BJ (cell line): ENCODE measurements at regions of chr3 and their contacts with region 1.

Region 1: DNA sequence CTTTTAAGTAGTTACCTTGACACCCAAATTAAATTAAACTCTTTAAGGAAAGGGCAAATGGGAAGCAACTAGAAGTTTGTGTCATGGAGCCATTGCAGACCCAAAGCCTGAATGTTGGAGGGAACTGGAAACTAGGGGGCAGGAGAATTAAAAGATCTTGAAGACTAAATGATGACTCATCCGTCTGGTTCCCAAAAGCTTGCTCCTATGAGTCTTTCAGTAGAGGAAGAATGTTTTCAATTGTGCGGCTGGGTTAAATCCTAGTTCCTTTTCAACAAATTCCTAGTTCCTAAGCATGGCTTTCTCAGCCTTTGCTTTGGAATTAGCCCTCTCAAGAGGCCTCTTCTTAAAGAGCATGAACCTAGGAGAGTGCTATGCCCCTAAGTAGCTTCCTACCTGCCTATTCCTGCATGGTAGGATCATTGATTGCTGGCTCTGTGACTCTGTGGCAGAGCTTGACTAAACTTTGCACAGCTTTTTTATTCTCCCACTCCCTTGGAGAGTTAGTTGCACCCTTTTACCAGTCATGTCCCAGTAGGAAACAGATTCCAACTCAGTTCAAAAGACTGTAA is 17.7 kb downstream of the CLEC3B start:
- DNase-seq: peak; percentile 52
- H3K4me3 ChIP-seq: no peak overlapping the region
- H3K27me3 ChIP-seq: no peaks in the 10 kb centered on the region
- CTCF ChIP-seq: peak; percentile 50

Region 2: DNA sequence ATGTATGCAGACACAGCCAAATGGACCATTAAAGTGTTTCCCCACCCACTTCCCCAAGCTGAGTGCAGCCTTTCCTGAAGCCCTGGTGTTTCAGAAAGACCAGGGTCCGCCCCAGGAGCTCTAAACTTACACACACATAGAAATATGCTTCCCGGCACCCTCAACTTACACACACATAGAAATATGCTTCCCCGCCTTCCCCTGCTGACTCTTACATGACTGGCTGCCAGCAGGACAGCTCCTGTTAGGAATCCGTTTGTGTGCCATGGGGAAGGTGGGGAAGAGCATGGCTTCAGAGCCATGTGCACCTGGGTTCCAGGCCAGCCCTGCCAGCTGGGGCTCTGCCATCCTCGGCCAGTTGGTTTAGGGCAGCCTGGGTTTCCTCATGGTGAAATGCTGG is 14.2 kb before region 1 on chr3:
- CTCF ChIA-PET with region 1: interaction called, 11 read pairs
- POLR2A ChIA-PET with region 1: no interaction called
- DNase-seq: no peak
- H3K4me3 ChIP-seq: no peak overlapping the region
- H3K27me3 ChIP-seq: no peaks in the 10 kb centered on the region
- CTCF ChIP-seq: no peak

Region 3: DNA sequence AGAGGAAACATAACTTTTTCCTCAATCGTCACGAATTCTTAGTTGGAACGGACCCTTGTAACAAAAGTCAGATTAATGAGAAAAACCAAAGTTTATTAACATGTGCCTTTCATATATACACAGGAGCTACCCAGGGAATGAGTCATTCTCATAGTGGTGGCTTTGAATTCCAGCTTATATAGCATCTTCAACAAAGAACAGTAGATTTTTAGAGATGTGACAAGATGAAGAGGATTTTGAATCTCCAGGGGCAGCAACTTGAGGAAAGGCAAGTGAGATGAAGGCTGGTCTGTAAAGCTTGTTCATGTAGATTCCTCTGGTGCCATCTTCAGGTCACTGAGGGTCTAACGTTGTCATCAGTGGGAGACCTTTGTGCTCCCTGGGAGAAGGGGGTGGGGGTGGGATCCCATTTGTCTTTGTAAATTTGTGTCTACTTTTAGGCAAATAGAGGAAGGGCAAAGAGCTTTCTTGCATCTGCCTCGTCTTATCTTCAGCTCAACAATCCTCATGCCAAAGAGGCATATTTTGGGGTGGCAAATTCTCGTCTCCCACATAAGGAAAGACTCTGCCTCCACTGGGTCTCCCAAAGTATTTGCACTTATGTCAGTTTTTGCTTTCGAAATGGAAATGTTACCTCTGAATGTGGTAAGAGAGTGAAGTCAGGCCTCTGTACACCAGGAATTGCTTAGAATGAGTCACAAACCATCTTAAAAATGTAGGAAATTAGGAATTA is 11.8 kb after region 1 on chr3:
- CTCF ChIA-PET with region 1: interaction called, 39 read pairs
- POLR2A ChIA-PET with region 1: interaction called, 3 read pairs
- DNase-seq: peak; percentile 43
- H3K4me3 ChIP-seq: no peak overlapping the region
- H3K27me3 ChIP-seq: no peaks in the 10 kb centered on the region
- CTCF ChIP-seq: peak; percentile 10; the same call in 1 of the 2 replicates

Region 4: DNA sequence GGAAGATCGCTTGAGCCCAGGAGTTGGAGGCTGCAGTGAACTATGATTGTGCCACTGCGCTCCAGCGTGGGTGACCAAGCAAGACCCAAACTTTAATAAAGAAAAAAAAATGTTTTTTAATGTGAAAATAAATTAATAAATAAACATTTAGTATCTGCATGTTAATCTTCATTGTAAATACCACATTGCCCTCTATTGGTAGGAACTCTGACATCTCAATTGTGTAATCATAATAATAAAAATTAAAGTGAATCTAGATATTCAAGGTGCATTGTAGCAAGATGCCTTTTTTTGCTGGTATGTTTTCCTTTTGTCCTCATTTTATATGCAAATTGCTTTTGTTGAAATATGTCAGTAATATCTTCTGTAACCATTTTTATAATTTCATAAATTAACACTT is 455.7 kb after region 1 on chr3:
- CTCF ChIA-PET with region 1: interaction called, 81 read pairs
- POLR2A ChIA-PET with region 1: no interaction called
- DNase-seq: no peak
- H3K4me3 ChIP-seq: no peak overlapping the region
- H3K27me3 ChIP-seq: no peaks in the 10 kb centered on the region
- CTCF ChIP-seq: peak; percentile 38

Region 5: GRCh38 chr3:45507820-45508317 is 464.1 kb after region 1 on chr3:
- CTCF ChIA-PET with region 1: interaction called, 35 read pairs
- POLR2A ChIA-PET with region 1: no interaction called
- DNase-seq: no peak
- H3K4me3 ChIP-seq: no peak overlapping the region
- H3K27me3 ChIP-seq: no peaks in the 10 kb centered on the region
- CTCF ChIP-seq: peak; percentile 64